ENCODE measurements at regions of chr15 and their contacts with region 1.

Region 1: DNA sequence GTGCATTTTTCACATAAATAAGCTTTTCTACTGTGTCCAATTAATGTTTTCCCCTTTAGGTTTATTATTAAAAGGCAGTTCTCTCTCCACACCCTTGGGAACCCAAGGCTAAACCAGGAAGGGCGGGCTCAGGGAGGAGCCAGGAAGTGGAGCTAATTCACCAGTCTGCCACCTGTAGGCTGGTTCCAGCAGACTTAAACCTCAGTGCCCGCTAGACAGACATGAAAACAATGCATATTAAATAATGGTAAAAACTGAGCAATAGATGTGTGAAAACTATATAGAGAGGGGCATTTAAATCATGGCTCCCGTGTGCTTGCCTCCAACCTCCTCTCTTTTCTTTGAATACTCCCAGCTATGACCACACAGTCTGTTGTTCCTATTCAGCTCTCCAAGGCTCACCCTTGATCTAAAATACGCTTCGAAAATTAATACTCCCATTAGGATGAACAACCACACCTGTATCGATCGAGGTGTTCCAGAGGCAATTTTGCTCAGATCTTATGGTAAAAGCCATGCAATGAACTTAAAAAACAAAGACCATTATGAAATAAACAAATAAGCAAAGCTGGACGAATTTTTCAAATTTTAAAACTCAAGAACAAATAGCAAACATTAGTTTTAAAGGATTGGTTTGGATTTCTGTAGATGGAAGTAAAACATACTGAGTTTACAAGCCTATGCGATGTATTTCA is 253.3 kb downstream of the TJP1 start:
- DNase-seq: no peak
- H3K4me3 ChIP-seq: no peak overlapping the region
- H3K27ac ChIP-seq: no peak overlapping the region
- H3K4me1 ChIP-seq: peaks cover 0 to 19% (median 13%) of the 10 kb centered on the region in 4 donors
- H3K27me3 ChIP-seq: peaks cover 4 to 52% (median 7%) of the 10 kb centered on the region in 3 donors
- CTCF ChIP-seq: peak in 1 of 4 experiments; percentile 8
- EP300 ChIP-seq: no peak
- POLR2A ChIP-seq: no peak

Region 2: GRCh38 chr15:29139540-29140459 is 429.2 kb before region 1 on chr15:
- intact Hi-C with region 1: loop called (anchors 5 kb)
- DNase-seq: no peak
- H3K4me3 ChIP-seq: no peak overlapping the region
- H3K27ac ChIP-seq: no peak overlapping the region
- H3K4me1 ChIP-seq: peaks cover 0 to 13% (median 7%) of the 10 kb centered on the region in 4 donors
- H3K27me3 ChIP-seq: peaks cover 0 to 20% (median 3%) of the 10 kb centered on the region in 3 donors
- CTCF ChIP-seq: peak; percentile 42 to 90 (median 56)
- EP300 ChIP-seq: no peak
- POLR2A ChIP-seq: no peak

Region 3: GRCh38 chr15:29269485-29270168 is 299.4 kb before region 1 on chr15 and contains the start of gene NSMCE3:
- intact Hi-C with region 1: loop called (anchors 5 kb)
- DNase-seq: peak; percentile 96
- H3K4me3 ChIP-seq: peak within 1 kb of the TSS; percentile 71 to 92 (median 76)
- H3K27ac ChIP-seq: peak within 1 kb of the TSS; percentile 88 to 94 (median 92)
- H3K4me1 ChIP-seq: peaks cover 0 to 34% (median 22%) of the 10 kb centered on the region in 4 donors
- H3K27me3 ChIP-seq: no peaks in the 10 kb centered on the region
- CTCF ChIP-seq: no peak
- EP300 ChIP-seq: peak in 1 of 4 donors; percentile 55
- POLR2A ChIP-seq: peak; percentile 90 to 93
- total RNA-seq, gene NSMCE3: 7.8 to 12.8 (median 10.3) TPM

Region 4: DNA sequence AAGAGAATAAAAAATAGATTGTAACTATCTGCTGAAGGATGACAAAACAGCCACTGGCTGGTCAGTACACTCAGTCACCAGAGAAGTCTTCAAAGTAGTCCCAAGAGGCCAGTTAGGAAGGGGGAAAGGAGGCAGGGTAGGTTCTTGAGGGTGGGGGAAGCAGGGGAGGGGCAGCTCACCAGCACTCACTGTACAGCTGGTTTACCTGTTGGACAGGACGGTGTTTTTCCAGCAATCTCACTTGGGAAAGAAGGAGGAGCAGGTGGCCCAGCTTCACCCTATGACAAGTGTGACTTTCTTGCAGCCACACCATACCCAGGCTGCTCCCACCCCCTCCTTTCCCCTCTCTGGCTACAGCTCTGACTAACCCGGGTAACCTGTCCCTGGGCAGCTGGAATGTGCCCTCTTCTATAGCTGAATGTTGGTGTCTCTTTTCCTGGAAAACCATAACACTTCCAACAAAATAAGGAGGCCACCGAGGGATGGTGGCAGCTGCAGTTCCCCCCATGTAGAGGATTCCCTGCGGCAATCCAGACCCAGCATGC is 96.0 kb before region 1 on chr15:
- intact Hi-C with region 1: no loop called
- DNase-seq: no peak
- H3K4me3 ChIP-seq: no peak overlapping the region
- H3K27ac ChIP-seq: no peak overlapping the region
- H3K4me1 ChIP-seq: no peaks in the 10 kb centered on the region
- H3K27me3 ChIP-seq: no peaks in the 10 kb centered on the region
- CTCF ChIP-seq: no peak
- EP300 ChIP-seq: no peak
- POLR2A ChIP-seq: no peak

Region 5: GRCh38 chr15:30043211-30043655 is 474.2 kb after region 1 on chr15:
- intact Hi-C with region 1: no loop called
- DNase-seq: no peak
- H3K4me3 ChIP-seq: no peak overlapping the region
- H3K27ac ChIP-seq: no peak overlapping the region
- H3K4me1 ChIP-seq: peaks cover 0 to 10% (median 4%) of the 10 kb centered on the region in 4 donors
- H3K27me3 ChIP-seq: no peaks in the 10 kb centered on the region
- CTCF ChIP-seq: peak in 1 of 4 experiments; percentile 35
- EP300 ChIP-seq: no peak
- POLR2A ChIP-seq: no peak

Measured in sigmoid colon (tissue), 7 donors.